ENCODE measurements at regions of chr5 and their contacts with region 1.

Region 1: GRCh38 chr5:40667161-40667663 is 12.5 kb upstream of the PTGER4 start:
- DNase-seq: no peak
- ATAC-seq: no peak
- H3K4me3 ChIP-seq: no peak overlapping the region
- H3K4me3 Mint-ChIP-seq: no peak overlapping the region
- H3K27ac ChIP-seq: no peak overlapping the region
- H3K27ac Mint-ChIP-seq: no peak overlapping the region
- H3K4me1 ChIP-seq: peaks cover 14% of the 10 kb centered on the region
- H3K4me1 Mint-ChIP-seq: peaks cover 30% of the 10 kb centered on the region
- H3K27me3 ChIP-seq: no peaks in the 10 kb centered on the region
- H3K27me3 Mint-ChIP-seq: no peaks in the 10 kb centered on the region
- CTCF ChIP-seq: no peak

Region 2: DNA sequence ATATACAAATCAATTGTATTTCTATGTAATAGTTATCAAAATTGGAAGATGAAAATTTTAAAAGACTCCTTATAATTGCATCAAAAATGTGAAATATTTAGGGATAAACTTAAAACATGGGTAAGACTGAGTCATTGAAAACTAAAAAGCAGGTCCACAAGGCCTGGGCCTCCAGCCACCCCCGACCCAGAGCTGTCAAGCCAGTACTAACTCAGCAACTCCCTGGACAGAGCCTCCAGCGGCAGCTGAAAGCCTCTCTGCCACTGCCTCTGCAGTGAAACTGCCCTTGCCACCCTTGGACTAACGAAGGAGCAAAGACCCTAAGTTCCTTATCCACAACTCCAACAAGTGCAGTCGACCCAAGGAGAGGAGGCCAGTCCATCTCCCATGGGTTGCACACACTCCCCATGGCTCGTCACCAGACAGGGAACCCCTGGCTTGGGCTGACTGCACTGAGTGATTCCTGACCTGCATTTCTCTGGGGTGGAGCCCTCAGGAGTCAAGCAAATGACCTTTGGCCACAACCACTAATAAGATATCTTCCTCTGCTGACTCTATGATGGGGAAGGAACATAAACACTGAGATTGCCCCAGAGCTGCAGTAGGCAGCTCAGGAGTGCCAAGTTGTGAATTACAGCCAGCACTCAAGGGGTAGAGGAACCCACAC is 33.0 kb after region 1 on chr5:
- CTCF ChIA-PET with region 1: no interaction called
- POLR2A ChIA-PET with region 1: no interaction called
- intact Hi-C with region 1: no loop called
- DNase-seq: no peak
- ATAC-seq: no peak
- H3K4me3 ChIP-seq: no peak overlapping the region
- H3K4me3 Mint-ChIP-seq: no peak overlapping the region
- H3K27ac ChIP-seq: no peak overlapping the region
- H3K27ac Mint-ChIP-seq: no peak overlapping the region
- H3K4me1 ChIP-seq: no peaks in the 10 kb centered on the region
- H3K4me1 Mint-ChIP-seq: no peaks in the 10 kb centered on the region
- H3K27me3 ChIP-seq: no peaks in the 10 kb centered on the region
- H3K27me3 Mint-ChIP-seq: no peaks in the 10 kb centered on the region
- CTCF ChIP-seq: no peak

Region 3: GRCh38 chr5:40714001-40714400 is 46.8 kb after region 1 on chr5:
- CTCF ChIA-PET with region 1: no interaction called
- POLR2A ChIA-PET with region 1: no interaction called
- intact Hi-C with region 1: loop called in 1 of 2 experiments (anchors 2 kb)
- DNase-seq: no peak
- ATAC-seq: no peak
- H3K4me3 ChIP-seq: no peak overlapping the region
- H3K4me3 Mint-ChIP-seq: no peak overlapping the region
- H3K27ac ChIP-seq: no peak overlapping the region
- H3K27ac Mint-ChIP-seq: no peak overlapping the region
- H3K4me1 ChIP-seq: no peaks in the 10 kb centered on the region
- H3K4me1 Mint-ChIP-seq: peaks cover 15% of the 10 kb centered on the region
- H3K27me3 ChIP-seq: no peaks in the 10 kb centered on the region
- H3K27me3 Mint-ChIP-seq: no peaks in the 10 kb centered on the region
- CTCF ChIP-seq: no peak

Measured in CD4-positive, alpha-beta T cell (primary cell).